ENCODE measurements at regions of chr1 and their contacts with region 1.

Region 1: DNA sequence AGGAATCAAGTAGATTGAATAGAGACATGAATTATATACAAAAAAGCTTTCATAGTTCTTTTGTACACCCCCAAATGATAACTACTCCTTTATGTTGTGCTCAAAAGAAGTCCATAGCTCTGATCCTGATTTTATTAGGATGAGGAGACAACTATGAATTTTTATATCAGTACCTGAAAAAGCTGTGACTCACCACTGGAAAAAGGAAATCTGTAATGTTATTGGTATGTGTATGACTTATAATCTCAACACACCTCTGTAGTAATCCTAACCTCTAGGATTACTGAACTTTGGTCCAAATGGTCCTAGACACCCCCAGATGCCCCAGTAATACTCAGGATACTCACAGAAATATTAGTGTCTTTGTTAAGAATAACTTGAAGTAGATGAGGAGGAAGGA is 10.2 kb downstream of the PRKAB2 start:
- DNase-seq: peak; percentile 92
- ATAC-seq: peak; percentile 90
- H3K4me3 ChIP-seq: peak overlapping the region; percentile 17; the same call in 1 of the 2 replicates
- H3K27ac ChIP-seq: peak overlapping the region; percentile 54
- H3K4me1 ChIP-seq: peaks cover 41% of the 10 kb centered on the region
- H3K27me3 ChIP-seq: no peaks in the 10 kb centered on the region
- CTCF ChIP-seq: no peak

Region 2: GRCh38 chr1:147129116-147129873 is 32.8 kb before region 1 on chr1:
- CTCF ChIA-PET with region 1: no interaction called
- POLR2A ChIA-PET with region 1: no interaction called
- intact Hi-C with region 1: loop called (anchors 2 kb)
- DNase-seq: peak; percentile 95
- ATAC-seq: peak; percentile 96
- H3K4me3 ChIP-seq: peak overlapping the region; percentile 23; the same call in 1 of the 2 replicates
- H3K27ac ChIP-seq: peak overlapping the region; percentile 92
- H3K4me1 ChIP-seq: peaks cover 30% of the 10 kb centered on the region
- H3K27me3 ChIP-seq: no peaks in the 10 kb centered on the region
- CTCF ChIP-seq: no peak

Measured in PC-3 (cell line).